ENCODE measurements at regions of chr15 and their contacts with region 1.

Region 1: GRCh38 chr15:71752604-71753289 is 57.6 kb upstream of the NR2E3 start:
- DNase-seq: no peak
- H3K4me3 ChIP-seq: no peak overlapping the region
- H3K27ac ChIP-seq: no peak overlapping the region
- H3K4me1 ChIP-seq: no peaks in the 10 kb centered on the region
- H3K27me3 ChIP-seq: no peaks in the 10 kb centered on the region
- CTCF ChIP-seq: peak; percentile 28 to 66 (median 57)
- EP300 ChIP-seq: no peak
- POLR2A ChIP-seq: no peak
- RAD21 ChIP-seq: peak; percentile 64 to 72

Region 2: GRCh38 chr15:71660501-71660900 is 92.2 kb before region 1 on chr15:
- CTCF ChIA-PET with region 1: no interaction called
- POLR2A ChIA-PET with region 1: no interaction called
- DNase-seq: no peak
- H3K4me3 ChIP-seq: no peak overlapping the region
- H3K27ac ChIP-seq: no peak overlapping the region
- H3K4me1 ChIP-seq: no peaks in the 10 kb centered on the region; a peak in 1 of 7 replicates
- H3K27me3 ChIP-seq: no peaks in the 10 kb centered on the region
- CTCF ChIP-seq: no peak
- EP300 ChIP-seq: no peak
- POLR2A ChIP-seq: no peak
- RAD21 ChIP-seq: no peak

Region 3: GRCh38 chr15:71723344-71723743 is 29.4 kb before region 1 on chr15:
- CTCF ChIA-PET with region 1: no interaction called
- POLR2A ChIA-PET with region 1: no interaction called
- DNase-seq: no peak
- H3K4me3 ChIP-seq: no peak overlapping the region
- H3K27ac ChIP-seq: no peak overlapping the region
- H3K4me1 ChIP-seq: no peaks in the 10 kb centered on the region
- H3K27me3 ChIP-seq: no peaks in the 10 kb centered on the region
- CTCF ChIP-seq: no peak
- EP300 ChIP-seq: no peak
- POLR2A ChIP-seq: no peak
- RAD21 ChIP-seq: no peak

Region 4: DNA sequence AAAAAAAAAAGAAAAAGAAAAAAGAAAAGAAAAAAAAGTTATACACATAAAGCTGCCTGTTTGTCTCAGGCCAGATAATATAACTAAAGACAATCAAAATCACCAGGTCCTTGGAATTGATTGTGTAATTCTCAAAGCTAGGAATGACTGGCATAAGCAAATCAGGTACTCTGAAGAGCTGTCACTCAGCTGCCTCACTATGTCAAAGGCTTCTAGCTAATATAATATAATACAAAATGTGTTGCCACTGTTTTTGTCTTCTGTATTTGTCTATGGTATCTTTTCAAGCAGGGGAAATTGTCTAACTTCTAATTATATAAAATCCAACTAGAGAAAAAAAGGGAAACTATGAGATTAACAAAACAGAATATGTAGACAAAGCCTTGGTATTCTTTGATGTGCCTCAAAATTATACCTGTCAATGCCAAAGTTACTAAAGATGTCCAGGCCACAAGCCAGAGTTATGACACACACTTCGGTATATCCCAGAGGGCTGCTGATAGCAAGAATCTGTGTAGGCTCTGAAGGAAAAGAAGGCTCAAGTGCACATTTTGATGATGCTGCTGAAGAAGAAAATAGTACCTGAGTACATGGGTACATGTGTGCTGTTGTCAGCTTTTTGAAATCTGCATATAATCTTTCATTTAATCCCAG is 20.6 kb after region 1 on chr15:
- CTCF ChIA-PET with region 1: interaction called, 49 read pairs
- POLR2A ChIA-PET with region 1: no interaction called
- DNase-seq: no peak
- H3K4me3 ChIP-seq: no peak overlapping the region
- H3K27ac ChIP-seq: no peak overlapping the region
- H3K4me1 ChIP-seq: no peaks in the 10 kb centered on the region; a peak in 1 of 7 replicates
- H3K27me3 ChIP-seq: no peaks in the 10 kb centered on the region
- CTCF ChIP-seq: no peak
- EP300 ChIP-seq: no peak
- POLR2A ChIP-seq: no peak
- RAD21 ChIP-seq: no peak

Region 5: GRCh38 chr15:72047020-72047419 is 294.3 kb after region 1 on chr15:
- CTCF ChIA-PET with region 1: no interaction called
- POLR2A ChIA-PET with region 1: no interaction called
- DNase-seq: no peak
- H3K4me3 ChIP-seq: no peak overlapping the region
- H3K27ac ChIP-seq: no peak overlapping the region
- H3K4me1 ChIP-seq: no peaks in the 10 kb centered on the region
- H3K27me3 ChIP-seq: no peaks in the 10 kb centered on the region
- CTCF ChIP-seq: no peak
- EP300 ChIP-seq: no peak
- POLR2A ChIP-seq: no peak
- RAD21 ChIP-seq: no peak

Region 6: DNA sequence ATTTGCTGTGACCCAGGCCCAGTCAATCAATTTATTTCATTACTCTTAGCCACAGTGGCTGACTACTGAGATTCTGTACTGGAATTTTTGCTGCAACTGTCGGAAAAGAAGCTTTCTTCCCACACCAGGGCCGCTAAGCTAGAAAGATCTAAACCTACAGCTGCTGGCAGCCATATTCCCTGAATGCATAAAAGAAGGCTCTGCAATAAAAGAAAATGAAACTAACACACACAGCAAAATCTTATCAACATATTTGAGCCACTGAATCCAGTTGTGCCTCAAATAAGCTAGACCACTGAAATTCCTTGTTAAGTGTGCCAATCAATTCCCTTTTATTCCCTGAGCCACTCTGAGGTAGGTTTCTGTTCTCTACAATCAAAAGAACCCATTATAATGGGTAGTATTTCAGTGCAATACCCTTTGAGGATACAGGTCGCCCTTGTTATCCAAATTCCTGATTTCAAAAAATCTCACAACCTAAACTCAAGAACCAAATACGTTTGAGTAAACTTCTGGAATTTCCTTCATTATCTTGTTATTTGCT is 304.9 kb after region 1 on chr15:
- CTCF ChIA-PET with region 1: no interaction called
- POLR2A ChIA-PET with region 1: no interaction called
- DNase-seq: no peak
- H3K4me3 ChIP-seq: 0 out of 8 replicates have a peak overlapping the region, but pooled peaks of 1 of the 4 experiments have one; percentile 6
- H3K27ac ChIP-seq: no peak overlapping the region
- H3K4me1 ChIP-seq: peaks cover 0 to 11% (median 8%) of the 10 kb centered on the region in 4 experiments; a peak in 4 of 7 replicates
- H3K27me3 ChIP-seq: no peaks in the 10 kb centered on the region
- CTCF ChIP-seq: no peak
- EP300 ChIP-seq: no peak
- POLR2A ChIP-seq: no peak
- RAD21 ChIP-seq: no peak

Region 7: GRCh38 chr15:72155635-72156616 is 403.2 kb after region 1 on chr15:
- CTCF ChIA-PET with region 1: interaction called, 11 read pairs
- POLR2A ChIA-PET with region 1: no interaction called
- DNase-seq: peak; percentile 27 to 92
- H3K4me3 ChIP-seq: peak overlapping the region in 3 of 4 experiments; percentile 10 to 40 (median 16); a peak in 3 of 8 replicates
- H3K27ac ChIP-seq: no peak overlapping the region
- H3K4me1 ChIP-seq: no peaks in the 10 kb centered on the region
- H3K27me3 ChIP-seq: peaks cover 0 to 4% (median 0%) of the 10 kb centered on the region in 4 experiments; a peak in 2 of 7 replicates
- CTCF ChIP-seq: peak; percentile 64 to 95 (median 88)
- EP300 ChIP-seq: no peak
- POLR2A ChIP-seq: no peak
- RAD21 ChIP-seq: peak; percentile 97 to 98

Measured in H1 (cell line).